WTC11 (cell line): ENCODE measurements at regions of chr9 and their contacts with region 1.

Region 1: GRCh38 chr9:84668196-84669012 is 1.1 kb upstream of the NTRK2 start:
- DNase-seq: peak; percentile 84
- ATAC-seq: peak; percentile 76
- H3K4me3 Mint-ChIP-seq: peak overlapping the region; percentile 74
- H3K27ac Mint-ChIP-seq: no peak overlapping the region
- H3K4me1 Mint-ChIP-seq: peaks cover 16% of the 10 kb centered on the region
- H3K27me3 Mint-ChIP-seq: peaks cover 85% of the 10 kb centered on the region
- CTCF ChIP-seq: peak; percentile 58

Region 2: GRCh38 chr9:84397151-84397728 is 271.2 kb before region 1 on chr9:
- CTCF ChIA-PET with region 1: interaction called, 24 read pairs
- POLR2A ChIA-PET with region 1: no interaction called
- DNase-seq: peak; percentile 77
- ATAC-seq: peak; percentile 90
- H3K4me3 Mint-ChIP-seq: no peak overlapping the region
- H3K27ac Mint-ChIP-seq: no peak overlapping the region
- H3K4me1 Mint-ChIP-seq: no peaks in the 10 kb centered on the region
- H3K27me3 Mint-ChIP-seq: no peaks in the 10 kb centered on the region; the same call in 1 of the 2 replicates
- CTCF ChIP-seq: peak; percentile 76

Region 3: DNA sequence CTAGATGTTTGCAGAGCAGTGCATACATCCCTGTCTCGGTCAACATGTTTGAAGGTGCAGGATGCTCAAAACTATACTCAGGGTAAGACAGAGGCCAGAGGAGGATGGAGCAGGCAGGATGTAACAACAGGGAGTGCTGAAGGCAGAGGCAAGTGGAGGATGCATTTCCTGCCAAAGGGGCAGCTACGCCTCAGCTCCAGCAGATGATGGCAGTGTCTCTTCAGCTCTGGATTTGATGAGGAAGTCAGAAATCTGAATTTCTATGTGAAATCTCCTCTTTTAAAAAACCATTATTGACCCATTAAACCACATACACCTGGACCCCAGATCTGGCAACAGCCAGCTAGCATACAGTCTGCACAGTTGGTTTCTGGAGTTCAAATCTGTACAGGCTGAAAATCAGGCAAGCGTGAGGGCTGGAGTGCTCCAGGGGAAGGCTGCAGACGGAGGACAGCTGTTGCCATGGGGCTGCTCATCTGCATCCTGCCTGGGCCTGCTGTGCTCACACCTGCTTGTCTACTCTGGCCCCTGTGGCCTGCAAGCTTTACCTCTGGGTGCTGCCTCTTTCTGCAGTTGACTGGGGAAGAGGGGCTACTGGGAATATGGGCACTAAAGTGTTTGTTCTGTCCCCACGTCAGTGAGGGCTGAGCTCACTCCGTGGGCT is 175.0 kb before region 1 on chr9:
- CTCF ChIA-PET with region 1: interaction called, 14 read pairs
- POLR2A ChIA-PET with region 1: no interaction called
- DNase-seq: peak; percentile 25
- ATAC-seq: peak; percentile 93
- H3K4me3 Mint-ChIP-seq: no peak overlapping the region
- H3K27ac Mint-ChIP-seq: peak overlapping the region; percentile 0; the same call in 1 of the 2 replicates
- H3K4me1 Mint-ChIP-seq: peaks cover 12% of the 10 kb centered on the region
- H3K27me3 Mint-ChIP-seq: no peaks in the 10 kb centered on the region; the same call in 1 of the 2 replicates
- CTCF ChIP-seq: no peak

Region 4: GRCh38 chr9:84781458-84781857 is 113.1 kb after region 1 on chr9:
- CTCF ChIA-PET with region 1: interaction called, 12 read pairs
- POLR2A ChIA-PET with region 1: no interaction called
- DNase-seq: peak; percentile 19
- ATAC-seq: no peak
- H3K4me3 Mint-ChIP-seq: no peak overlapping the region
- H3K27ac Mint-ChIP-seq: no peak overlapping the region
- H3K4me1 Mint-ChIP-seq: no peaks in the 10 kb centered on the region
- H3K27me3 Mint-ChIP-seq: no peaks in the 10 kb centered on the region
- CTCF ChIP-seq: peak; percentile 29; the same call in 1 of the 2 replicates

Region 5: DNA sequence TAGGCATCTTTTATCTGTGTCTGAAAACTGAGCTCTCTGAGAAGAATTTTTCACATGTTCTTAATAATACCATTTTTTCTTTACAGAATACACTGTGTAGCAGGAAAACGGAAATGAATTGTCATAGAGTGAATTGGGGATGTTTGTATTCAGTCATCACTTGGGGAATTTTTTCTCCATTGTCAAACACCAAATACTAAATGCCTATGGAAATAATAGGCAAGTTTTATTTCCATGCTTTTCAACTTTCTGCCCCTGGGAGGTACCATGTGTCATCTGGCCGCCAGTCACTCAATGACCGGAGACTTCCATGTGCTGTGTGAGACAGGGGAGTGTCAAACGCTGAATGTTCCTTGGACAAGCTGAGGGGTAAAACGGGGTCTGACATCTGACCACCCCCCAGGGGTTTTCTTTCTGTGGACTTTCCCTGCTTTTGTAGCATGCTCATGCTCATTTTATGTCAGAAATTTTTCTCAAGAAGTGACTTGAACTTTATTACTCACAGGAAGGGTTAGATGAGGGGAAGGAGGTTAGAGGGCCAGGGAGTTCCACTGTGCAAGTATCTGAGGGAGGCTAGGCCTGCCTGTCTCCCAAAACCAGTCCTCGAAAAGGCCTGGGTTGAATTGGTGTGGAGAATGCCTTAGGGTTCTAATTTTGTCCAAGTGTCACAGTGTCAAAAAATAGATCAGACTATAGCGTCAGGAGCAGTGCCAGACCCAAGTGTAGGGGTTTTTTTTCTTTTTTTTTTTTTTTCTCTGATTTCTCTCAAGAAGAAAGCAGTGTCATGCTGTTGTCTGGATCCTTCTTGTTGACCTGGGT is 634.7 kb after region 1 on chr9:
- CTCF ChIA-PET with region 1: no interaction called
- POLR2A ChIA-PET with region 1: no interaction called
- DNase-seq: no peak
- ATAC-seq: no peak
- H3K4me3 Mint-ChIP-seq: no peak overlapping the region
- H3K27ac Mint-ChIP-seq: no peak overlapping the region
- H3K4me1 Mint-ChIP-seq: no peaks in the 10 kb centered on the region
- H3K27me3 Mint-ChIP-seq: peaks cover 7% of the 10 kb centered on the region
- CTCF ChIP-seq: no peak